Motor neuron (in vitro differentiated cells): ENCODE measurements at regions of chr1 and their contacts with region 1.

Region 1: GRCh38 chr1:186482661-186483255 is 21.8 kb upstream of the PDC start:
- ATAC-seq: peak; percentile 30 to 84 (median 66)
- H3K4me3 ChIP-seq: no peak overlapping the region
- H3K27ac ChIP-seq: no peak overlapping the region
- H3K4me1 ChIP-seq: no peaks in the 10 kb centered on the region

Region 2: DNA sequence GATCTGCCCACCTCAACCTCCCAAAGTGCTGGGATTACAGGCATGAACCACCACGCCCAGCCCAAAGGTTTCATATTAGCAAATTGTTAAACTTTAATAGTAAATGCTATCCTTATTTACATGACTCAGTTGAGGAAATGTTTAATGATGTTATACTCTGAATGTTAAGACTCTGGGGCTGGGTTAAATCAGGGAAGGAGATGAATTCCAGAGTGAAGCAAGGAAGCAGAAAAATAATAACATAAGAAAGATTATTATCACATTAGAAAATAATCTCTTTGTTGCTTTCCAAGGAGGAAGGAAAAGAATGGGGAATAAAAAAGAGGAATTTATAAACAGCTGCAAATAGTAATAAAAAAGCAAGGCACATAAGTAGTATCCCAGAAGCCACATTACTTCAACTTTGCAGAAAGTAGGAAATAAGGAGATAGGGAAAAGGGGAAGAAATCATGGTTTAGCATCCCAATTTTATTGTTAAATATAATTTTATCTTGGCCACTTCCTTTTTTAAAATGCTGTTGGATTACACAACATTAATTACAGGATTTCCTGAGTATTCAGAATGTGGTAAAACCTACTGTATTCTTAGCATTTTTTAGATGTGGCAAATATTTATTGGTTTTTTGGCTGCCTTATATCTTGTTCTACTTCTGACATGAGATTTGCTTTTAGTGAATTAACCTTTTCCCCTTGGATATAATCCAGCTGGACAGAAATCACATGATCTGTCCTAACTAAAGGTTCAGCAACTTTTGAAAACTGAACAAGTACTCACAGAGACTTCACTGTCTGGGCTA is 92.4 kb after region 1 on chr1:
- in situ Hi-C with region 1: loop called in 1 of 9 experiments (anchors 25 kb)
- ATAC-seq: no peak
- H3K4me3 ChIP-seq: no peak overlapping the region
- H3K27ac ChIP-seq: no peak overlapping the region
- H3K4me1 ChIP-seq: no peaks in the 10 kb centered on the region

Region 3: GRCh38 chr1:186680245-186681061 is 197.7 kb after region 1 on chr1 and contains the start of gene PTGS2:
- in situ Hi-C with region 1: loop called in 1 of 9 experiments (anchors 10 kb)
- ATAC-seq: peak; percentile 97 to 100 (median 99)
- H3K4me3 ChIP-seq: peak within 1 kb of the TSS; percentile 43 to 57 (median 47)
- H3K27ac ChIP-seq: no peak within 1 kb of the TSS
- H3K4me1 ChIP-seq: no peaks in the 10 kb centered on the region
- total RNA-seq, gene PTGS2: 0.11 to 2.3 (median 0.80) TPM